ENCODE measurements at regions of chr9 and their contacts with region 1.

Region 1: DNA sequence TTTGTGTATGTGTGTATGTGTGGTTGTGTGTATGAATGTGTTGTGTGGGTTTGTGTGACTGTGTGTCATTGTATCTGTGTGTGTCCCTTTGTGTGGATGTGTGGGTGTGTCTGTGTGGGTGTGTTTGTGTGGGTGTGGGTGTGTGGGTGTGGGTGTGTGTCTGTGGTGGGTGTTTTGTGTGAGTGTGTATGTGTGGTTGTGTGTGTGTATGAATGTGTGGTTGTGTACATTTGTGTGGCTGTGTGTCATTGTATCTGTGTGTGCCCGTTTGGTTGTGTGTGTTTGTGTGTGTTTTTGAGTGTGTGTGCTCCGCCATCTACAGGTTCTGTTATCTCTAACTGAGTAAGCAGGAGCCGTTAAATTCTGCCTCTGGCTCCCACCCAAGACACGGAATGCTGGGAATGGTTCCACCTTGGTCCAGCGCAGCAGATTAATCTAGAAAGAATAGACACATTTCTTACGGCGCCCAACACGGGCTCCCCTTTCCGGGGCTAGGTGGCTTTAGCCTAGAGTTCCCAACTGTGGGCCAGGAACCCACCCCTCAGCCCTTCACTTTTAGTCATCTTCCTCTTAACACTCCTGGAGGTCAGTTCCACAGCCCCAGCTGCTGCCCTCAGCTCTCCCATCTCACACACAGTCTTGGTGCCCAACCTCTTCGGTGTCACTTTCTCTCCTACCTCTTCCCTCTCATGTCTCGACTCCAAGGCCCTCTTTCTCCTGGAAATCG is 197.1 kb downstream of the TTLL11 start:
- DNase-seq: no peak
- ATAC-seq: no peak
- H3K4me3 ChIP-seq: no peak overlapping the region
- H3K27ac ChIP-seq: no peak overlapping the region
- H3K4me1 ChIP-seq: no peaks in the 10 kb centered on the region
- H3K27me3 ChIP-seq: no peaks in the 10 kb centered on the region
- CTCF ChIP-seq: no peak

Region 2: DNA sequence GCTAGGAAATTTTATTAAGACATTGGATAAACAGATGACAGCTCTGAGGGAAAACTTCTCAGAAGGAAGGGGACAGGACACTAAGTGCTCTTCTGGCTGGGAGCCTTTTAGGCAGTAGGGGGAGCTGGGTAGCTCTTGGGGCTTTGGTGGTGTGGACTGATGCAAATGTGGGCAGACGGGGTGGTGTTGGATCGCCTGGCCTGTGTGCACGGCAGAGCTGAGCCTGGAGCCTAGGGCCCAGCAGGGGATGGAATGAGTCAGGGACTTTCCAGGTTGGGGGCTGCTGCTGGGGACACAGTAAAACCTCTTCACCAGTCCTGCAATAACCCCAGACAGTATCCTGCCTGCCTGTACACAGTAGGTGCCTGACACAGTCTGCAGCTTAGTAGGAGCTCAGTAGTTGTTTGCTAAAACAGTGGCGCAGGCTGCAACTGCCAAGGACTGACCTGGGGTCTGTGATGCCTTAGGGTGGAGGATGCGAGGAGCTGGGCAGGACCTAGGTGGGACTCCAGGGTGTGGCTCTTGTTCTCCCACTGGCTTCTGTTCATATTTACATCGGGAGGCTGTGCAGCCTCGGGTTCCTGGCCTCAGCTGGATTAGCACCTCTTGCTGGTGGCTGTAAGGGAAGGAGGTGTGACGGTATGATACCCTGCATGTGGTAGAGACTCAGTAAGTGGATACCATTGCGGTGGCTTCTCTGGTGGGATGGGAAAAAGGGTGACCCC is 160.8 kb before region 1 on chr9:
- CTCF ChIA-PET with region 1: no interaction called
- POLR2A ChIA-PET with region 1: no interaction called
- intact Hi-C with region 1: no loop called
- DNase-seq: peak; percentile 11
- ATAC-seq: peak; percentile 72
- H3K4me3 ChIP-seq: no peak overlapping the region
- H3K27ac ChIP-seq: no peak overlapping the region
- H3K4me1 ChIP-seq: no peaks in the 10 kb centered on the region
- H3K27me3 ChIP-seq: no peaks in the 10 kb centered on the region
- CTCF ChIP-seq: peak; percentile 52; the same call in 1 of the 2 replicates

Region 3: DNA sequence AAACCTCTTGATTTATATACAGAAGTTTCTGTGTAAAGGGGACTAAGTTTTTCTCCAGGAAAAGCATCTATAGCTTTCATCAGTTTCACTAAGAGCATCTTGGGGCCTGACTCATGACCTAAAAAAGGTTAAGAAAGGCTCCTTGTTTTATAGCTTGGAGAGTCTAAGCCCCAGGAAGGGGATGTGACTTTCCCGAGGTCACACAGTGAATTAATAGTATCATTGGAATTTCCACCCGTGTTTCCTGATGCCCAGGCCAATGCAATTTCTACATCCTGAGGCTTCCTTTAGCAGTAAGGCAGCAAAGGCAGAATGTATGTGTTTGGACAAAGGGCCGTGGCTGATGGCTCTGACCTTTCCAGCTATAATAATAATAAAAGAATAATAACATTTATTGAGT is 272.4 kb after region 1 on chr9:
- CTCF ChIA-PET with region 1: no interaction called
- POLR2A ChIA-PET with region 1: interaction called, 12 read pairs
- intact Hi-C with region 1: no loop called
- DNase-seq: no peak
- ATAC-seq: no peak
- H3K4me3 ChIP-seq: no peak overlapping the region
- H3K27ac ChIP-seq: no peak overlapping the region
- H3K4me1 ChIP-seq: no peaks in the 10 kb centered on the region
- H3K27me3 ChIP-seq: no peaks in the 10 kb centered on the region
- CTCF ChIP-seq: no peak